OCI-LY7 (cell line): ENCODE measurements at regions of chr9 and their contacts with region 1.

Region 1: DNA sequence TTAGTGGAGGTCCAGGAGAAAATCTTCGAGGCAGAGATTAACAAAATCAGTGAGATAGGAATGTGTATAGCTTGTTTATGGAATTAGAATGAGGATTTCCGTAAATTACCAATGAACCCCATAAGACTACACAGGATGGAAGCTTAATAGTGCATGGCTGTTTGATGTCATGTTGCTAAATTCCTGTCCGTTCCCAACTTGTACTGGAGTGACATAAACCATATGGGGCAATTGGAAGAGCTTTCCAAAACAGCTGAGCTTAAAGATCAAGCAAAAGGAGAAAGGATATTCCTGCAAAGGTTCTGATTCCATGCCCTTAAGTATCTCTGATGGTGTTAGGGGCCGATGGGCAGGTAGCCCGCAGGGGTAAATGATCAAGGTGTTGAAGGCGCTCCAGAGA is 17.4 kb downstream of the GLE1 start:
- DNase-seq: no peak
- H3K4me3 ChIP-seq: no peak overlapping the region
- H3K27ac ChIP-seq: no peak overlapping the region
- H3K4me1 ChIP-seq: no peaks in the 10 kb centered on the region
- CTCF ChIP-seq: no peak

Region 2: DNA sequence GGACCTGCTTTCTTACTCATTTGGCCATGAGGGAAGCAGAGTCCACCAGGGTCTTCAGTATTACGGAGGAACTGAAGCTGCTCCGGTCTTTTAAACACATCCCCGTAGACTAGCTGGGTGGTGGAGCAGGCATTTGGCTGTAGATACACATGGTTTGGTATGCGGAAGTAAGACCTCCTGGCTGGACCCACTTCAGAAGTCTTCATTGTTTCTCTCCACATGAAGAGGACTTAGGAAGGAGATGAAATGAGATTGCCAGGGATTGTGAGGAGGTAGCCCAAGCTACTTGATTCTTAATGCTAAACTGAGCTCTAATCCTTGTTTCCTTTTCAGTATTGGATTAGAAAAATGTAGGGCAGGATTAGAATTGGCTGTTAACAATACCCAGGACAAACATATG is 877.0 kb before region 1 on chr9:
- CTCF ChIA-PET with region 1: interaction called, 10 read pairs
- POLR2A ChIA-PET with region 1: no interaction called
- intact Hi-C with region 1: no loop called
- DNase-seq: no peak
- H3K4me3 ChIP-seq: no peak overlapping the region
- H3K27ac ChIP-seq: no peak overlapping the region
- H3K4me1 ChIP-seq: no peaks in the 10 kb centered on the region
- CTCF ChIP-seq: no peak

Region 3: DNA sequence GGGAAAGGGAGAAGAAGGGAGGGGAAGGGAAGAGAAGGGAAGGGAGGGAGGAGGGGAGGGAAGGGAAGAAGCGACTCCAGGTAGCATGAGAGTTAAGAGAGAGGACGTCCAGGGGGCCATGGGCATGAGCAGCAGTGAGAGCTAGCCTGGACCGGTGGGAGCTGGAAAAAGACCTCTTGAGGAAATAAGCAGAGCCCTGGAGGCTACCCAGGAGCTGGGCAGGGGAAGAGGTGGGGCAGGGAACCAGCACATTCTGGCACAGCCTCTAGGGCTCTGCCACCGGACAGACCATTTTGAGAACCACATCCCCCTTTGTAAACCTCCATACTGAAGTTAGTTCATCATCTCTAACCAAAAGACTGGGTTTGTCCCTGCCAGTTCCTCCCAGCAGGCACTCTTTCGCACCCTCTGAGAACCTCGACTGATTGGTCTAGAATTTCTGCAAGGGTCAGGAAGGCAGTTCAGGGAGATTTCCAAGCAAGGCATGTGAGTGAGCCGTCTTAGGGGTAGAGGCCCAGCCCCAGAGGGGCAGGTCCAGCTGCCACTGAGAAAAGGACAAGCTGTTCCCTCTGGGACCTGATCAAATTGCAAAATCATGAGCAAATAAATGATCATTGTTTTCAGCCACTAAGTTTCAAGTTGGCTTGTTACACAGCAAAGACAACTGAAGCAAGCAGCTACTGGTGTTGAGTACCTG is 466.5 kb before region 1 on chr9:
- CTCF ChIA-PET with region 1: no interaction called
- POLR2A ChIA-PET with region 1: no interaction called
- intact Hi-C with region 1: no loop called
- DNase-seq: no peak
- H3K4me3 ChIP-seq: no peak overlapping the region
- H3K27ac ChIP-seq: no peak overlapping the region
- H3K4me1 ChIP-seq: peaks cover 20% of the 10 kb centered on the region
- CTCF ChIP-seq: no peak